AG04450 (cell line): ENCODE measurements at regions of chr7 and their contacts with region 1.

Region 1: GRCh38 chr7:95476904-95477594 is 8.7 kb upstream of the ASB4 start:
- DNase-seq: peak; percentile 30
- H3K4me3 ChIP-seq: no peak overlapping the region
- H3K27ac ChIP-seq: no peak overlapping the region
- H3K27me3 ChIP-seq: no peaks in the 10 kb centered on the region
- CTCF ChIP-seq: peak; percentile 84

Region 2: GRCh38 chr7:95172420-95172819 is 304.6 kb before region 1 on chr7:
- CTCF ChIA-PET with region 1: no interaction called
- POLR2A ChIA-PET with region 1: no interaction called
- DNase-seq: no peak
- H3K4me3 ChIP-seq: no peak overlapping the region
- H3K27ac ChIP-seq: no peak overlapping the region
- H3K27me3 ChIP-seq: no peaks in the 10 kb centered on the region
- CTCF ChIP-seq: no peak

Region 3: DNA sequence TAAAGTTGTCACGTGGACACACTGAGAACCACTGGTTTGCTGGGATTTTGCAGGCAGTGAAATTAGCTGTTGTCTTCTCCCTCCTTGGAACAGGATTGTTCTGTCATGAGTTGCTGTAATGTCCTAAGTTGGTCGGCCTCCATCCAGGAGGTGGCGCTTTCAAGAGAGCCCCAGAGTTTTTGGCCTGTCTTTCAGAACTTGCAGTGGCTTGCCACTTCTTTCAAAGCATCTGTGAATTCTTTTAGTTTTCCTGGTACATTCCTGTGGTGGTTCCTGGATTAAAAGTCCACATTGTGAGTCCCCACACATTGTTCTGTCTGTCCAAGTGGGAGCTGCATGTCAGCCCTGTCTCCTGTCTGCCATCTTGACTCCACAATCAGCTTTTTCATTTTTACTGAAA is 286.5 kb before region 1 on chr7:
- CTCF ChIA-PET with region 1: interaction called, 34 read pairs
- POLR2A ChIA-PET with region 1: no interaction called
- DNase-seq: no peak
- H3K4me3 ChIP-seq: no peak overlapping the region
- H3K27ac ChIP-seq: no peak overlapping the region
- H3K27me3 ChIP-seq: no peaks in the 10 kb centered on the region
- CTCF ChIP-seq: peak; percentile 31

Region 4: GRCh38 chr7:95309951-95310350 is 167.1 kb before region 1 on chr7:
- CTCF ChIA-PET with region 1: interaction called, 10 read pairs
- POLR2A ChIA-PET with region 1: no interaction called
- DNase-seq: no peak
- H3K4me3 ChIP-seq: no peak overlapping the region
- H3K27ac ChIP-seq: no peak overlapping the region
- H3K27me3 ChIP-seq: no peaks in the 10 kb centered on the region
- CTCF ChIP-seq: no peak

Region 5: DNA sequence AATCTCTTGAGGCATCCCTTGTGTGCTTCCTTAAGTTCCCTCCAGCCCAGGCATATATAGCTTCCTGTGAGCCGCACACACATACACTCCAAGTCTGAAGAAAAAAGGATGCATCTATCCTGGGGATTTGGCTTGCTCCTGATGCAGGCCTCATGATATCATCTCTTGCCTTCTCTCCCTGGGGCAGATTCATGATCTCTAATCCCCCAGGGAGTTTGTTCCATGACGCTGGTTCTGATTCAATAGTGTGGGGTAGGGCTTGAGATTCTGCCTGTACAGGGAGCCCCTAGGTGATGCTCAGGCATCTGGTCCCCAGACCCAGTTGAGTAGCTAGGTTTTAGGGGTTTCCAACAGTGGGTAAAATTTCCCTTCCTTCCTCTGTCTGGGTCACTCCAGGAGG is 154.2 kb before region 1 on chr7:
- CTCF ChIA-PET with region 1: no interaction called
- POLR2A ChIA-PET with region 1: no interaction called
- DNase-seq: no peak
- H3K4me3 ChIP-seq: no peak overlapping the region
- H3K27ac ChIP-seq: no peak overlapping the region
- H3K27me3 ChIP-seq: no peaks in the 10 kb centered on the region
- CTCF ChIP-seq: no peak

Region 6: DNA sequence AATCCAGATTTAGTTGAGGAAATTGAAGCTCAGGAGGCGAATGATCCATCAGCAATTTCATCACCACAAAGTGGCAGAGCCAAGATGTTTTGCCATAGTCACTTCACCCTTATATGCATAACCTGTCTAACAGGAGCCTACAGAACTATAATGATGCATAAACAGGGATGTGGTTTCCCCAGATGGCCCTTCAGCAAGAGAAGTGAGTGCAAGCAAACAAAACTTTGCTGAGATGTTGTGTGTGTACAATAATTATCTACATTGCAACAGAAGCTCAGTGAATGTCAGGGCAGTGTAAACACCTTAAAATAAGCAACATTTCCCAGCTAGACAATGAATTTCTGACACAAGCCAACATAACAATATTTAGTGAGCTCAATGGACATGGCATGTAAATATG is 109.4 kb before region 1 on chr7:
- CTCF ChIA-PET with region 1: no interaction called
- POLR2A ChIA-PET with region 1: no interaction called
- DNase-seq: no peak
- H3K4me3 ChIP-seq: no peak overlapping the region
- H3K27ac ChIP-seq: no peak overlapping the region
- H3K27me3 ChIP-seq: no peaks in the 10 kb centered on the region
- CTCF ChIP-seq: no peak

Region 7: DNA sequence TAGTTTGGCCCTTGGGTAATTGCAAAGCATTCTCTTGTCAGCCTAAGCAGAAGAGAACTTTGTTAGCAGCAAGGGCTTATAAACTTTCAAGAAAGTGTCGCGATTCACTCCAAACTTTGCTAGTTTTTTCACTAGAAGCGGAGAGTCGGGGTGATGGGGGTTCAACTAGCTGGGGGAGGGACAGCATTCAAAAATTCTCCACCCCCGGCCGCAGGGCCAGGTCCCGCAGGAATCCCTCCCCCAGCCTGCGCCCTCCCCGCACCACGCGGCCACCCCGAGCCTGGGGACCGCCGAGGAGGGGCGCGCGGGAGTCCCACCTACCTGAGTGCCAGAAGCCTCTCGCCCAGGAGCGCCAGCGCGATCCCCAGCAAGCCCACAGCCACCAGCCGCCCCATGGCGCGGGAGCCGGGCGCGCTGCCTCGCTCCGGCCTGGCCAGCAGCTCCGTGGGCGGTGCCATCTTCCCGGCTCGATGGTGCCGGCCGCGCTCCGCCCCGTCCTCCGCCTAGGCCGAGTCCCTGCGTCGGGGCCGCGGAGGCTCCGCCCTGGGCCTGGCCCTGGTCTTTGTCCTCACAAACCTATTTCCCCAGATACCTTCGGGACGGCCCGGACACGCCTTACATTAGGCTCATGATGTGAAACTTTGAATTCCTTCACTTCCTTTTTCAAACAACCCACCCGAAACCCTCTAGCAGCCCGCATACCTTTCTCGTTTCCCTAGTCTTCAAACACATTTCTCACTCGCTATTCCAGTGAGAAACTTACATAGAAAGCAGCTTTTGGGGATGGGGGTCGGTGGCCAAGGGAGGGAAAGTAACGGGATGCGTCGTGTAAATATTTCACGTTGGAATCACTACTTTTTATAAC is 42.3 kb before region 1 on chr7 and contains the start of gene PON2:
- CTCF ChIA-PET with region 1: interaction called, 16 read pairs
- POLR2A ChIA-PET with region 1: no interaction called
- DNase-seq: peak; percentile 34
- H3K4me3 ChIP-seq: peak within 1 kb of the TSS; percentile 73
- H3K27ac ChIP-seq: peak within 1 kb of the TSS; percentile 72
- H3K27me3 ChIP-seq: no peaks in the 10 kb centered on the region
- CTCF ChIP-seq: no peak
- polyA plus RNA-seq, gene PON2: 86.2 and 110 TPM in 2 replicates

Region 8: GRCh38 chr7:95511716-95512260 is 34.7 kb after region 1 on chr7:
- CTCF ChIA-PET with region 1: interaction called, 10 read pairs
- POLR2A ChIA-PET with region 1: no interaction called
- DNase-seq: peak; percentile 27
- H3K4me3 ChIP-seq: no peak overlapping the region
- H3K27ac ChIP-seq: no peak overlapping the region
- H3K27me3 ChIP-seq: no peaks in the 10 kb centered on the region
- CTCF ChIP-seq: peak; percentile 92

Region 9: DNA sequence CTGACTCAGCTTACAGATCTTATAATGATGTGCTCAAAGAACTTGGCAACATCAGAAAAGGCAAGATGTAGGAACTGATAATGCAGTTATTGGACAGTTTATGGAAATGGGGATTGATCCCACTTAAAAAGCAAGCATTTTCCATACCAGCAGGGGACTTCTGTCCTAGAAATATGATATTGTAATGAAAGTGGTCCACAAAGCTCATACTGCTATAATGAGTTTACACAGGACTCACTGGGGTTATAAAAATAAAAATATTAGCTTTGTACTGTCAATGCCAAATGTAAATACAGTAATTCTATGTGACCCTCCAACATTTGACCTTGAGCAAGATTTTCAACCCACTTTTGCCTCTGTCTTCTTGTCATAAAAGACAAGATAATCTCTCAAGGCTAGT is 1378.1 kb after region 1 on chr7:
- CTCF ChIA-PET with region 1: interaction called, 11 read pairs
- POLR2A ChIA-PET with region 1: no interaction called
- DNase-seq: no peak
- H3K4me3 ChIP-seq: no peak overlapping the region
- H3K27ac ChIP-seq: no peak overlapping the region
- H3K27me3 ChIP-seq: no peaks in the 10 kb centered on the region
- CTCF ChIP-seq: no peak